Sigmoid colon (tissue), 7 donors: ENCODE measurements at regions of chr10 and their contacts with region 1.

Region 1: GRCh38 chr10:29998142-29998808 is 61.1 kb downstream of the JCAD start:
- DNase-seq: peak; percentile 88
- H3K4me3 ChIP-seq: no peak overlapping the region
- H3K27ac ChIP-seq: no peak overlapping the region
- H3K4me1 ChIP-seq: peaks cover 0 to 51% (median 42%) of the 10 kb centered on the region in 4 donors
- H3K27me3 ChIP-seq: no peaks in the 10 kb centered on the region
- CTCF ChIP-seq: peak; percentile 96 to 100 (median 98)
- EP300 ChIP-seq: no peak
- POLR2A ChIP-seq: no peak

Region 2: GRCh38 chr10:30059209-30060107 is 61.2 kb after region 1 on chr10 and contains the start of gene JCAD:
- intact Hi-C with region 1: loop called (anchors 5 kb)
- DNase-seq: peak; percentile 89
- H3K4me3 ChIP-seq: peak within 1 kb of the TSS; percentile 83 to 99 (median 87)
- H3K27ac ChIP-seq: peak within 1 kb of the TSS; percentile 88 to 94 (median 92)
- H3K4me1 ChIP-seq: peaks cover 0 to 60% (median 47%) of the 10 kb centered on the region in 4 donors
- H3K27me3 ChIP-seq: no peaks in the 10 kb centered on the region
- CTCF ChIP-seq: peak in 1 of 4 experiments; percentile 22
- EP300 ChIP-seq: no peak
- POLR2A ChIP-seq: no peak
- total RNA-seq, gene JCAD: 99.7 to 141 (median 123) TPM

Region 3: DNA sequence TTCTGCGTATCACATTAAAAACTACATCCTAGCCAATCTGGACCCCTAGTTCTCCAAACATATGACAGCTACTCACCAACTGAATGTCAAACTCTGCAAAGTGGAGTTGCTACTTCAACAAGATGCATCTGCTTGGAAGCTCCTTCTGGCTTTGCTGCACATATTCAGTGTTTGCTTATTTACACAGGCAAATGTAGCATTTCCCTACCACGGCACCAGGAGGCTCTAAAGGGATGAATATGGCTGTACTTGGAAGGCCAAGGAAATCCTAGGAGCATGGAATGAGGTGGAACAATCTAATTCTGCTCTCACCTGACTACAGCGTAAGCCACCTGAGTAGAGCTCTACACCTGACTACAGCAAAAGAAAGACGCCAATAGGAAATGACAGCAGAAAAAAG is 311.1 kb after region 1 on chr10:
- intact Hi-C with region 1: loop called (anchors 10 kb)
- DNase-seq: no peak
- H3K4me3 ChIP-seq: no peak overlapping the region
- H3K27ac ChIP-seq: no peak overlapping the region
- H3K4me1 ChIP-seq: no peaks in the 10 kb centered on the region
- H3K27me3 ChIP-seq: no peaks in the 10 kb centered on the region
- CTCF ChIP-seq: no peak
- EP300 ChIP-seq: no peak
- POLR2A ChIP-seq: no peak

Region 4: DNA sequence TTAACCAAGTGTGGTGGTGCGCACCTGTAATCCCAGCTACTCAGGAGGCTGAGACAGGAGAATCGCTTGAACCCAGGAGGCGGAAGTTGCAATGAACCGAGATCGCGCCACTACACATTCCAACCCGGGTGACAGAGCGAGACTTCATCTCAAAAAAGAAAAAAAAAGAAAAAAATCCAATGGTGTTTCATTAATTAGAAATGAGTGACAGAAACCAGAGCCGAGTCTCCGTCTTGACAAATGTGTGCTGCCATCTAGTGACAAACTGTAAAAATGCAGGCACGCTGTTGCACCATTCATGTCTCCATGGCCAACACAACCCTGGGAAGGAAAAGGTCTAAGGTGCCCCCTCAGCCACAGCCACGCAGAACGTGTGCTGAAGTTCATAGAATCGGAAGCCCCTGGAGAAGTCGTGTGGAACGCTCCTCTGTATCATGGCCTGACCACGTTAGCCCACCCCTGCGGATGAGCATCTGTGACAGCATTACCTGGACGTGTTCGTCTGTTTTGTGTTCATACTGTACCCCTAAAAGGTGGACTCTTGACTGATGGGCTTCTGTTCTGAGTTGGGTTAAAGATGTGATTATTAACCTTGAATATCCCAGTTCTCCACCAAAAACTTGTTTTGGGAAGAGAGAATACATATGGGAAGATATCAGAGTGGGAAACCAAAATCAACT is 536.3 kb after region 1 on chr10:
- intact Hi-C with region 1: loop called (anchors 10 kb)
- DNase-seq: peak; percentile 86
- H3K4me3 ChIP-seq: no peak overlapping the region
- H3K27ac ChIP-seq: no peak overlapping the region
- H3K4me1 ChIP-seq: peaks cover 0 to 14% (median 0%) of the 10 kb centered on the region in 4 donors
- H3K27me3 ChIP-seq: no peaks in the 10 kb centered on the region
- CTCF ChIP-seq: peak; percentile 83 to 92 (median 90)
- EP300 ChIP-seq: no peak
- POLR2A ChIP-seq: no peak